ENCODE measurements at regions of chr2 and their contacts with region 1.

Region 1: GRCh38 chr2:42086500-42086953 is 38.7 kb downstream of the PKDCC start:
- DNase-seq: peak; percentile 49
- H3K4me3 ChIP-seq: no peak overlapping the region
- H3K27ac ChIP-seq: no peak overlapping the region
- H3K4me1 ChIP-seq: peaks cover 7% of the 10 kb centered on the region
- H3K27me3 ChIP-seq: no peaks in the 10 kb centered on the region
- CTCF ChIP-seq: peak; percentile 42 to 90 (median 80)
- POLR2A ChIP-seq: no peak

Region 2: DNA sequence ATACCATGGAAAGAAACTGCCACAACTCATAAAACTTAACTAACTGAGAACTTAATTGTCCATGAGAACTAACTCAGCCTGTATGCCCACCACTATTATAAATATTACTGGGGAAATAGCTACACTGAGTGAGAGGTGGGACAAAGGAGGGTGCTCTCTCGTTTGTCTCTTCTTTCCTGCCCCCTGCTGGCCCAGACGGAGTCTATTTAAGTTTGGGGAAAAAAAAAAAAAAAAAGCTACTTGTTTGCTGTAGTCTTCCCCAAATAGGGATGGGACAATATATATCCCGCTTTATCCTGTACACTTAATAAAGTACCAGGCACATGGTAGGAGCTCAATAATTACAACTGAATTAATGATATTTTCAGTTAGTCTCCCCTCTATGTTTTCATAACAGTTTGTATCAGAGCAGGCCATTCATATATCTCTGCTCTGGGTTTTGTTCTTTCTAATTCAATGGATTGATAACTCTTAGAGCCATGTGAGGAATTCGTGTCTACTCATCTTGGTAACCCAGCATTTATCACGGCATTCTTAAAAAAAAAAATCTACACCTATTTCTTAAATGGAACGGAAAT is 686.4 kb before region 1 on chr2:
- intact Hi-C with region 1: no loop called
- DNase-seq: no peak
- H3K4me3 ChIP-seq: no peak overlapping the region
- H3K27ac ChIP-seq: no peak overlapping the region
- H3K4me1 ChIP-seq: no peaks in the 10 kb centered on the region
- H3K27me3 ChIP-seq: no peaks in the 10 kb centered on the region
- CTCF ChIP-seq: no peak
- POLR2A ChIP-seq: no peak

Region 3: GRCh38 chr2:41853427-41854216 is 232.9 kb before region 1 on chr2:
- intact Hi-C with region 1: loop called (anchors 2 kb)
- DNase-seq: peak; percentile 33
- H3K4me3 ChIP-seq: no peak overlapping the region
- H3K27ac ChIP-seq: no peak overlapping the region
- H3K4me1 ChIP-seq: no peaks in the 10 kb centered on the region
- H3K27me3 ChIP-seq: no peaks in the 10 kb centered on the region
- CTCF ChIP-seq: peak; percentile 57 to 69 (median 62)
- POLR2A ChIP-seq: no peak

Region 4: DNA sequence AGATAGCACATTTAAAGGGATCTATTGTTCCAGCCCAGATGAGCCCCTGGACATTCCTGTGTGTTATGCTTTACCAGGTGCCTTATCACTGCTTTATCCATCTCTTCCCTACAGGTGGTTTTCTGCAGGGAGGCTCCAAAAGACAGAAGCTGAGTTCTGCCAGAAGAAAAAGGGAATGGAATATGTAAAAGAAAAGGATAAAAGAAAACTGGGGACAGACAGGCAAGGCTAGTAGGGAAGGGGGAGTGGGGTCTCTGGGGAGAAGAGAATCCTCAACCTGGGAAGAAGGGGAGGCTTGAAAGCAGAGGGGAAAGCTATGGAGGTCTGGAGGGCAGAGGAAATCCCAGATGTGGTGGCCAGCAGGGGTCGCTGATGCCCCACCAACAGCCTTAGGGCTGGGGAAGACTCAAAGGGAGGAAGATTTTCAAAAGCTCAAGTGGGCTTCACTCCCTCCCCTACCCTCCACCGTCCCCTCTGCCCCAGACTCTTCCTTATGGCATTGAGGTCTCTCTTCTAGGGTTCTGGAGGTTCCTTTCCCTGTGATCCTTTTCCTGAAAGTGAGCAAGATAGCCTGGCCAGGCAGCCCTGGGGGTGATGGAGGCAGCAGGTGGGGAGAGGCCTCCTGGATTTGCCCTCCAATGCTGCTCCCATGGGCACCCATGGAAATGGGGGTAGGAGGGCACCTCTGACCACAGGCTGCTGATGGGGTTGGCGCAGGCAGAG is 216.8 kb before region 1 on chr2:
- intact Hi-C with region 1: loop called (anchors 2 kb)
- DNase-seq: peak; percentile 56
- H3K4me3 ChIP-seq: no peak overlapping the region
- H3K27ac ChIP-seq: no peak overlapping the region
- H3K4me1 ChIP-seq: no peaks in the 10 kb centered on the region
- H3K27me3 ChIP-seq: no peaks in the 10 kb centered on the region
- CTCF ChIP-seq: peak; percentile 80 to 90 (median 86)
- POLR2A ChIP-seq: no peak

Region 5: DNA sequence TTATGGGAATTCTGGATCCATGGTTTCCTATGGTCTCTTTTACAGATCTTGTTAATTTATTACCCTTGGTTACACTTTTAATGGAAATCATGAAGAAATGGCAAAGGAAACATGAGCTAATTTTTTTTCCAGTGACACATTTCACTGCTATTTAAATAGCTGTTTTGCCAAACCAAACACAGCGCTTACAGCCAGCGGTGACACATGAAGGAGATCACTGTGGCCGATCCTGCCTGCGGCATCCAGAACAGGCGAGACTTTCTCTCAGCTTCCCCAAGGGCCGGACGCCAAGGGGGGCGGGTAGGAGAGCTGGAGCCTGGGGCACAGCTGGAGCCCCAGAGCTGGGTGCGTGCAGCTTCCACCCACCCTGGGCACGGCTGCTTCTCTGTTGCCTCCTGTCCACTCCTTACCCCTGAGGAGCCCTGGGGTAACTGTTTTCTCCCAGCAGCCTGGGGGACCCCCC is 120.1 kb before region 1 on chr2:
- intact Hi-C with region 1: loop called (anchors 10 kb)
- DNase-seq: peak; percentile 27
- H3K4me3 ChIP-seq: no peak overlapping the region
- H3K27ac ChIP-seq: peak overlapping the region in 1 of 2 donors; percentile 55
- H3K4me1 ChIP-seq: no peaks in the 10 kb centered on the region
- H3K27me3 ChIP-seq: no peaks in the 10 kb centered on the region
- CTCF ChIP-seq: no peak
- POLR2A ChIP-seq: no peak

Region 6: DNA sequence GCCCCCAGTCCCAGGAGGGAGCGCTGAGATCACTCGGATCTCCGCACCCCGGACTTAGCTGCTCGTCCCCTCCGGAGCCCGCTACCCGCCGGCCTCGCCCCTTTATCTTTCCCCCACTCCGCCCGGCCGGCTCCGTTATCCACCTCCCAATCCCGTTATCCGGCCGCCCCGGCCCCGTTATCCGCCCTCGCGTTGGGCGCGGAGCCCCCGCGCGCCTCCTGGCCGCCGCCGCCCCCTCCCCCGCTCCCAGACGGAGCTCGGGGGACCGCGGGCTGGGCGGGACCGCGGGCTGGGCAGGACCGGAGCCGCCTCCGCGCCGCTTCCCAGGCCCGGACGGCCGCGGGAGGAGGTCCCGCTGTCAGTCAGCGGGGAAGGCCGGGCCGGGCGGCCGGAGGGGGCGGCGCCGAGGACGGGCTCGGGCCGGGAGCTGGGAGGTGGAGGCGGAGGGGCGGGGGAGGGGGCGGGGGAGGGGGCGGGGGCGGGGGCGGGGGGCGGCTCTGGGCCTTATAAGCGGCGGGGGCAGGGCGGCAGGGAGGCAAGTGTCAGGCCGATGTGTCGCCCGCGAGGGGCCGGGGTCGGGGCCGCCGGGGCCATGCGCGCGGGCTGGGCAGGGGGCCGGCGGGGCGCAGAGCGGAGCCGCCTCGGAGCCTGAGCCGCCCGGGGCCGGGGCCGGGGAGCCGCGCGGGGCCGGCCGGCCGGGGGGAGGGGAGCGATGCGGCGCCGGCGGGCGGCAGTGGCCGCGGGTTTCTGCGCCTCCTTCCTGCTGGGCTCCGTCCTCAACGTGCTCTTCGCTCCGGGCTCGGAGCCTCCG is 38.8 kb before region 1 on chr2 and contains the start of gene PKDCC:
- intact Hi-C with region 1: loop called (anchors 5 kb)
- DNase-seq: peak; percentile 56
- H3K4me3 ChIP-seq: peak within 1 kb of the TSS; percentile 51 to 53
- H3K27ac ChIP-seq: peak within 1 kb of the TSS; percentile 64 to 73
- H3K4me1 ChIP-seq: no peaks in the 10 kb centered on the region
- H3K27me3 ChIP-seq: no peaks in the 10 kb centered on the region
- CTCF ChIP-seq: no peak
- POLR2A ChIP-seq: no peak
- total RNA-seq, gene PKDCC: 11.1 to 61.4 TPM

Measured in prostate gland (tissue), 2 donors.